ENCODE measurements at regions of chr3 and their contacts with region 1.

Region 1: DNA sequence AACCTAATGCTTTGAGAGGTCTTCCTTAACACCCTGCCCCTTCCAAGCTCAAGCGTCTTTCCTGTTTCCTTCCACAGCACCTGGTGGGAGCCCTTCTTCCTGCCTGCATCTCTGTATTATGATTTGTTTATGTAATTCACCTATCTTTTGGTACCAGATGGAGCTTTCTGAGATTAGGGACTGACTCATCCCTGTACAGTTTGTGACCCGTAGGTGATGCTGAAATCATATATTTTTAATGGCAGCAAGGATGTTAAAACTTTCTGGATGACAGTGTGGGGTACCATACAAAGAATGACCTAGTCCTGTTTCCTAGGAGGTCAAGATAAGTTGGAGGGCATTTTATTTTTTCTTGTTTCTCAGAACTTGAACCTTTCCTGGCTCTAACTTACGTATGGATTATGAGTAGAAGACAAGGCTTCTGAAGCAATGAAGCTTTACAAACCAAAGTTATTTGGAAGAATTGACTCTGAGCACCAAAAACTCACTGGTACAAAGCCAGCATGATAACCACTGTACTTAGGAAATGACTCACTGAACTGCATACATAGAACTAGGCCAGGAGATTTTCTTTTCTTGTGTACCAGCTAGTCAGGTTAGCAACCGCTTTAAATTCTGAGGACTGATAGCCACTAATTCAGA is 46.6 kb downstream of the HHLA2 start:
- DNase-seq: peak; percentile 17
- H3K4me3 Mint-ChIP-seq: no peak overlapping the region
- H3K27ac Mint-ChIP-seq: peak overlapping the region; percentile 58
- H3K4me1 Mint-ChIP-seq: peaks cover 13% of the 10 kb centered on the region
- H3K27me3 Mint-ChIP-seq: peaks cover 3% of the 10 kb centered on the region

Region 2: GRCh38 chr3:108271626-108272025 is 71.3 kb before region 1 on chr3:
- CTCF ChIA-PET with region 1: no interaction called
- POLR2A ChIA-PET with region 1: no interaction called
- intact Hi-C with region 1: no loop called
- DNase-seq: no peak
- H3K4me3 Mint-ChIP-seq: no peak overlapping the region
- H3K27ac Mint-ChIP-seq: no peak overlapping the region
- H3K4me1 Mint-ChIP-seq: no peaks in the 10 kb centered on the region
- H3K27me3 Mint-ChIP-seq: no peaks in the 10 kb centered on the region

Region 3: GRCh38 chr3:108301695-108302404 is 41.1 kb before region 1 on chr3:
- CTCF ChIA-PET with region 1: no interaction called
- POLR2A ChIA-PET with region 1: no interaction called
- intact Hi-C with region 1: loop called (anchors 1 kb)
- DNase-seq: peak; percentile 32
- H3K4me3 Mint-ChIP-seq: peak overlapping the region; percentile 57
- H3K27ac Mint-ChIP-seq: peak overlapping the region; percentile 72
- H3K4me1 Mint-ChIP-seq: peaks cover 35% of the 10 kb centered on the region
- H3K27me3 Mint-ChIP-seq: no peaks in the 10 kb centered on the region

Region 4: GRCh38 chr3:108328821-108329486 is 14.0 kb before region 1 on chr3:
- CTCF ChIA-PET with region 1: interaction called, 3 read pairs
- POLR2A ChIA-PET with region 1: no interaction called
- intact Hi-C with region 1: loop called (anchors 1 kb)
- DNase-seq: no peak
- H3K4me3 Mint-ChIP-seq: no peak overlapping the region
- H3K27ac Mint-ChIP-seq: no peak overlapping the region
- H3K4me1 Mint-ChIP-seq: peaks cover 18% of the 10 kb centered on the region
- H3K27me3 Mint-ChIP-seq: peaks cover 1% of the 10 kb centered on the region

Region 5: DNA sequence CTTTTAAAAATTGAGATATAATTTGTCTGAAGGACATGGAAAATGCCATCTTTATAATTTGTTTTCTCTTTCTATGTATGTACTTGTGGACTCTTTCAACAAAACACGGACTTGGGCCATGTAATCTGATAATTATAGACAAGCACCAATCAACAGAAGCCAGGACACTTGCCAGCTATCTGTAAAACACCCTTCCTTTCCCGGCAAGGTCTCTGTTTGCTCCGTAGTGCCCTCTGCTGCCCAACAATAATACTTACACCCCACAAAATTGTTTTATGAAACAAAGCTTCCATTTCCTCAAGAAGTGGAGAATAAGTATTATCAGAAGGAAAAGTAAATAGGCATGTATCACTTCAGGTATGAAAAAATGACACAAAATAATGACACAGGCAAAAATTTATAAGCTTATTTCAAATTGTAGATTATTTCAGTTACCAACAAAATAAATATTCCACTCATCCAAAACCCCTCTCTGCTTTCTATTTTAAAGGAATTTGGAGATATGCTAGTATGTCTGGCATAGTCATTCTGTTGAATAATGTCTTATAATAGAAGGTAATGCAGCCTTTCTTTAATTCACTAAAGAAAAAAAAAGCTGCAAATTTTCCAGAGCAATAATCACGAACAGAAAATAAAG is 134.7 kb after region 1 on chr3:
- CTCF ChIA-PET with region 1: interaction called, 8 read pairs
- POLR2A ChIA-PET with region 1: no interaction called
- intact Hi-C with region 1: loop called (anchors 5 kb)
- DNase-seq: peak; percentile 67
- H3K4me3 Mint-ChIP-seq: no peak overlapping the region
- H3K27ac Mint-ChIP-seq: no peak overlapping the region
- H3K4me1 Mint-ChIP-seq: peaks cover 3% of the 10 kb centered on the region
- H3K27me3 Mint-ChIP-seq: peaks cover 1% of the 10 kb centered on the region